ENCODE measurements at regions of chr1 and their contacts with region 1.

Region 1: GRCh38 chr1:23959041-23959460 is 577 bp upstream of the PNRC2 start:
- DNase-seq: peak; percentile 78
- ATAC-seq: peak; percentile 77
- H3K4me3 Mint-ChIP-seq: peak overlapping the region; percentile 99
- H3K27ac Mint-ChIP-seq: peak overlapping the region; percentile 100
- H3K4me1 Mint-ChIP-seq: peaks cover 82% of the 10 kb centered on the region
- H3K27me3 Mint-ChIP-seq: no peaks in the 10 kb centered on the region
- CTCF ChIP-seq: no peak

Region 2: GRCh38 chr1:23403735-23404486 is 555.1 kb before region 1 on chr1:
- CTCF ChIA-PET with region 1: no interaction called
- POLR2A ChIA-PET with region 1: no interaction called
- intact Hi-C with region 1: no loop called
- DNase-seq: peak; percentile 71
- ATAC-seq: peak; percentile 95
- H3K4me3 Mint-ChIP-seq: no peak overlapping the region
- H3K27ac Mint-ChIP-seq: no peak overlapping the region
- H3K4me1 Mint-ChIP-seq: no peaks in the 10 kb centered on the region
- H3K27me3 Mint-ChIP-seq: peaks cover 7% of the 10 kb centered on the region
- CTCF ChIP-seq: peak; percentile 78

Region 3: GRCh38 chr1:23777979-23778814 is 180.9 kb before region 1 on chr1 and contains the start of gene PITHD1:
- CTCF ChIA-PET with region 1: no interaction called
- POLR2A ChIA-PET with region 1: interaction called, 7 read pairs
- intact Hi-C with region 1: loop called (anchors 1 kb)
- DNase-seq: peak; percentile 83
- ATAC-seq: peak; percentile 86
- H3K4me3 Mint-ChIP-seq: peak within 1 kb of the TSS; percentile 91
- H3K27ac Mint-ChIP-seq: peak within 1 kb of the TSS; percentile 90
- H3K4me1 Mint-ChIP-seq: peaks cover 30% of the 10 kb centered on the region
- H3K27me3 Mint-ChIP-seq: no peaks in the 10 kb centered on the region
- CTCF ChIP-seq: no peak
- total RNA-seq, gene PITHD1: 58.7 and 63.3 TPM in 2 replicates

Region 4: DNA sequence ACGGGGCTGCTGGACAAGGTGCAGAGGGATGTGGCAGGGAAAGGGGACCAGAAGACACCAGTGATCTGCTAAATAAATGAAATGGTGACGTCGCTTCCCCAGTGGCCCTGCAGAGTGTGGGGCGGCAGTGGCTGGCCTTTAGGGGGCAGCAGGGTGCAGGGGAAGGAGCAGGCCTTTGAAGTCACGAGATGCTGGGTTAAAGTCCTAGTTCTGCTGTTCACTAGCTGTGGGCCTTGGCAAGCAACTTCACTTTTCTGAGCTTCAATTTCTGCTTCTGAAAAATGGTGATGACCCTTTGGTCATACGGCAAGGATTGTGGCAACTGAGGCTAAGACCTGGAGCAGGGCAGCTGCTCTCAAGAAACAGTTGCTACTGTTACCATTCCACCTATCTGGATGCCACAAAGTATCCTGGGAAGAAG is 149.3 kb before region 1 on chr1:
- CTCF ChIA-PET with region 1: interaction called, 27 read pairs
- POLR2A ChIA-PET with region 1: interaction called, 18 read pairs
- intact Hi-C with region 1: loop called (anchors 1 kb)
- DNase-seq: peak; percentile 69
- ATAC-seq: peak; percentile 89
- H3K4me3 Mint-ChIP-seq: no peak overlapping the region
- H3K27ac Mint-ChIP-seq: peak overlapping the region; percentile 74
- H3K4me1 Mint-ChIP-seq: peaks cover 25% of the 10 kb centered on the region
- H3K27me3 Mint-ChIP-seq: no peaks in the 10 kb centered on the region
- CTCF ChIP-seq: no peak

Region 5: GRCh38 chr1:23908493-23909341 is 50.3 kb before region 1 on chr1:
- CTCF ChIA-PET with region 1: no interaction called
- POLR2A ChIA-PET with region 1: interaction called, 43 read pairs
- intact Hi-C with region 1: loop called (anchors 2 kb)
- DNase-seq: peak; percentile 59
- ATAC-seq: peak; percentile 63
- H3K4me3 Mint-ChIP-seq: peak overlapping the region; percentile 98
- H3K27ac Mint-ChIP-seq: peak overlapping the region; percentile 99
- H3K4me1 Mint-ChIP-seq: peaks cover 94% of the 10 kb centered on the region
- H3K27me3 Mint-ChIP-seq: no peaks in the 10 kb centered on the region
- CTCF ChIP-seq: no peak

Region 6: DNA sequence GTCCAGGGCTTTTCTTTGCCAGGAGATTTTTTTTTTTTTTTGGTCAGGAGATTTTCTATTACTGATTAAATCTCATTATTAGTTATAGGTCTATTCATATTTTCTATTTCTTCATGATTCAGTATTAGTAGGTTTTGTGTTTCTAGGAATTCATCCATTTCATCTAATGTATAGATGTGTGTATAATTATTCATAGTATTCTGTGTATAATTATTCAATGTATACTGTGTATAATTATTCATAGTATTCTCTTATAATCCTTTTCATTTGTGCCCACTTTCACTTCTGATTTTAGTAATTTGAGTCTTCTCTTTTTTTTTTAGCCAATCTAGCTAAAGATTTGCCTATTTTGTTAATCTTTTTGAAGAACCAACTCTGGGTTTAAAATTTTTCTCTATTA is 11.7 kb before region 1 on chr1:
- CTCF ChIA-PET with region 1: interaction called, 6 read pairs
- POLR2A ChIA-PET with region 1: interaction called, 9 read pairs
- intact Hi-C with region 1: loop called (anchors 2 kb)
- DNase-seq: no peak
- ATAC-seq: no peak
- H3K4me3 Mint-ChIP-seq: no peak overlapping the region
- H3K27ac Mint-ChIP-seq: no peak overlapping the region
- H3K4me1 Mint-ChIP-seq: peaks cover 20% of the 10 kb centered on the region
- H3K27me3 Mint-ChIP-seq: no peaks in the 10 kb centered on the region
- CTCF ChIP-seq: no peak

Region 7: GRCh38 chr1:23995431-23995837 is 36.4 kb after region 1 on chr1:
- CTCF ChIA-PET with region 1: no interaction called
- POLR2A ChIA-PET with region 1: no interaction called
- intact Hi-C with region 1: no loop called
- DNase-seq: no peak
- ATAC-seq: no peak
- H3K4me3 Mint-ChIP-seq: no peak overlapping the region
- H3K27ac Mint-ChIP-seq: no peak overlapping the region
- H3K4me1 Mint-ChIP-seq: peaks cover 12% of the 10 kb centered on the region
- H3K27me3 Mint-ChIP-seq: no peaks in the 10 kb centered on the region
- CTCF ChIP-seq: no peak

Region 8: DNA sequence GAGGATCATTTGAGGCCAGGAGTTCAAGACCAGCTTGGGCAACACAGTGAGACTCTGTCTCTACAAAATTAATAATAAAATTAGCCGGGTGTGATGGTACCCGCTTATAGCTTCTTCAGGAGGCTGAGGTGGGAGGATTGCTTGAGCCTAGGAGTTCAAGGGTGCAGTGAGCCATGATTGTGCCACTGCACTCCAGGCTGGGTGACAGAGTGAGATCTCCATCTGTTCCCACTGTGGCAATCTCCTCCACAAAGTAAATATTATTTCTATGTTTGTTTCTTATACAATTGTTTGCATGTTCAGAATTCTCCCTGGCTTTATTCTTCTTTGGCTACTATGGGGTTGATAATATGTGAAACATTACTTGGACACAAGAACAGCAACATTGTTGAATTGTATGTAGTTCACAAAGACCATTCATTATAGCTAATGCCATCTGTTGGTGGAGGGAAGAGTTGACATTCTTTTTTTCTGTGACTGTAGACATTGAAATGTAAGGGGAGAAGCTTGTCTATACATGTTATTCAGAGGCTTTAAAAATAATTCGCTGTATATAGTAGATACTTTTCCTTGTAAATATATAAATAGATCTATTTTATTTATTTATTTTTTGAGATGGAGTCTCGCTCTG is 68.9 kb after region 1 on chr1:
- CTCF ChIA-PET with region 1: interaction called, 4 read pairs
- POLR2A ChIA-PET with region 1: interaction called, 4 read pairs
- intact Hi-C with region 1: loop called (anchors 5 kb)
- DNase-seq: no peak
- ATAC-seq: no peak
- H3K4me3 Mint-ChIP-seq: no peak overlapping the region
- H3K27ac Mint-ChIP-seq: no peak overlapping the region
- H3K4me1 Mint-ChIP-seq: peaks cover 6% of the 10 kb centered on the region
- H3K27me3 Mint-ChIP-seq: no peaks in the 10 kb centered on the region
- CTCF ChIP-seq: no peak

Region 9: DNA sequence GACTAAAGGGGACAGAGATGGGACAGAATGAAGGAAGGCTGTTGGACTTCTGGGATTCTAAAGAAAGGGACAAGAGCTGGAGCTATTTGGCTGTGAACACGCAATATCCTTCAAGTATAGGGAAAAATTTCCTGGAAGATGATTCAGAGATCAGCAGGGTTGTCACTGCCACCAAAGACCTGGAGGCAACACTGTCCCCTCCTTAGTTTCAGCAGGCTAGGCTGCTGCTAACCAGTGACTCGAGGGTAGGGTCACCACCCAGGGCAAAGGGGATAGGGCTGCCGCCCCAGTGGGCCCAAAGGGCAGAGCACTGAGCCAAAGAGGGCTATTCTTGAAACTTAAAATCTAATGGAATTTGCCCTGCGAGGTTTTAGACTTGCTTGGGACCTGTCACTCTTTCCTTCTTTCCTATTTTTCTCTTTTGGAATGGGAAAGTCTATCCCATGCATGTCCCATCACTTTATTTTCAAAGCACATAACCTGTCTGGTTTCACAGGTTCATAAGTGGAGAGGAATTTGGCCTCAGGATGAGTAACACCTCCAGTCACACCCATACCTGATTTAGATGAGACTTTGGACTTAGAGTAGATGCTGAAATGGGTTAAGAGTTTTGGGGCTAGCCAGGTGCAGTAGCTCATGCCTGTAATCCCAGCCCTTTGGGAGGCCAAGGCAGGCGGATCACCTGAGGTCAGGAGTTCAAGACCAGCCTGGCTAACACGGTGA is 216.1 kb after region 1 on chr1:
- CTCF ChIA-PET with region 1: no interaction called
- POLR2A ChIA-PET with region 1: no interaction called
- intact Hi-C with region 1: no loop called
- DNase-seq: no peak
- ATAC-seq: no peak
- H3K4me3 Mint-ChIP-seq: no peak overlapping the region
- H3K27ac Mint-ChIP-seq: no peak overlapping the region
- H3K4me1 Mint-ChIP-seq: peaks cover 65% of the 10 kb centered on the region
- H3K27me3 Mint-ChIP-seq: no peaks in the 10 kb centered on the region
- CTCF ChIP-seq: no peak

Region 10: GRCh38 chr1:24705260-24706073 is 746.4 kb after region 1 on chr1:
- CTCF ChIA-PET with region 1: no interaction called
- POLR2A ChIA-PET with region 1: interaction called, 11 read pairs
- intact Hi-C with region 1: no loop called
- DNase-seq: peak; percentile 17
- ATAC-seq: peak; percentile 96
- H3K4me3 Mint-ChIP-seq: peak overlapping the region; percentile 65
- H3K27ac Mint-ChIP-seq: peak overlapping the region; percentile 37
- H3K4me1 Mint-ChIP-seq: peaks cover 15% of the 10 kb centered on the region
- H3K27me3 Mint-ChIP-seq: no peaks in the 10 kb centered on the region
- CTCF ChIP-seq: no peak

Region 11: DNA sequence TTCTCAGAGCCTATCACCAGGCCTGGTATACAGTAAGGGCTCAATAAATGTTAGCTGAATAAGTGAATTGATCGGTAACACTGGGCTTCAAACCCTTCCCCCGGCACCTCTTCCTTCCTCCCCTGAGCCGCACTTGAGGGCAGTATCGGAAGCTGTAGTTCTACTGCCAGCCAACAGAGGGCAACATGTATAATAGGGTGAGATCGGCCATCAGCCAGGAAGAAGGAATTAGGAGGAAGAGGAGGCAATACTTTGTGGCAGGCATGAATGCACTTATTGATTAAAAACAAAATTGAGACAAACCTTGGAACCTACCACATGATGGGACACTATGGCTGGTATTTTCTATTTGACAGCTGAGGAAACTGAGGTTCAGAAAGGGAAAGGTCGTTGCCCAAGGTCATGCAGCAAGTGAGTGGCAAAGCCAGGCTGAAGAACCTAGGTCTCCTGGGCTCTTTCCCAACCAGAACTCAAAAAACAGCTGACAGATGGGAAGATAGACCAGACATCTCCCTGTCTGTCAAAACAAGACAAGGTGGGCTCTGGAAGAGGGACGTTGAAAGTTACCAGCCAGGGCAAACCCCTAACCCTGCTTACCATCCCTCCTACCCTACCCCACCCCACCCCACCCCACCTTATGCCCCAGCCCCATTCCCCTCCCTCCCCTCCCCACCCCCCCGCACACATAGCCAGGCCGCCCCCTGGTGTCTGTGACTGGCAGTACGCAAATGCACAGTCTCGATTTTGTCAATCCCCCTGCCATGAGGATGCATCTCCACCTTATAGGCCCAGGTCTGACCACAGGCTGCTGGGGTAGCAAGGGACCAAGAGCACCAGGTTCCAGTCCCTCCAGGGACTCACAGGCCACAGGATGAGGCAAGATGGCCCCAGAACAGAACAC is 1078.4 kb after region 1 on chr1:
- CTCF ChIA-PET with region 1: no interaction called
- POLR2A ChIA-PET with region 1: no interaction called
- intact Hi-C with region 1: no loop called
- DNase-seq: peak; percentile 64
- ATAC-seq: peak; percentile 56
- H3K4me3 Mint-ChIP-seq: no peak overlapping the region
- H3K27ac Mint-ChIP-seq: peak overlapping the region; percentile 46
- H3K4me1 Mint-ChIP-seq: peaks cover 9% of the 10 kb centered on the region
- H3K27me3 Mint-ChIP-seq: no peaks in the 10 kb centered on the region
- CTCF ChIP-seq: no peak